Ovary (tissue), 10 donors: ENCODE measurements at regions of chr15 and their contacts with region 1.

Region 1: GRCh38 chr15:99565299-99566156 is at the start of gene MEF2A:
- DNase-seq: peak; percentile 96 to 97 (median 96)
- H3K4me3 ChIP-seq: peak within 1 kb of the TSS; percentile 71
- H3K27ac ChIP-seq: peak within 1 kb of the TSS; percentile 91 to 99
- H3K4me1 ChIP-seq: peaks cover 3% of the 10 kb centered on the region
- H3K27me3 ChIP-seq: no peaks in the 10 kb centered on the region
- CTCF ChIP-seq: no peak
- EP300 ChIP-seq: no peak
- POLR2A ChIP-seq: peak; percentile 87
- total RNA-seq, gene MEF2A: 43.2 to 82.7 (median 66.4) TPM

Region 2: GRCh38 chr15:99250494-99251435 is 314.8 kb before region 1 on chr15:
- intact Hi-C with region 1: no loop called
- DNase-seq: peak; percentile 99
- H3K4me3 ChIP-seq: peak overlapping the region; percentile 71
- H3K27ac ChIP-seq: peak overlapping the region; percentile 75 to 81
- H3K4me1 ChIP-seq: peaks cover 5% of the 10 kb centered on the region
- H3K27me3 ChIP-seq: no peaks in the 10 kb centered on the region
- CTCF ChIP-seq: no peak
- EP300 ChIP-seq: no peak
- POLR2A ChIP-seq: peak; percentile 98

Region 3: DNA sequence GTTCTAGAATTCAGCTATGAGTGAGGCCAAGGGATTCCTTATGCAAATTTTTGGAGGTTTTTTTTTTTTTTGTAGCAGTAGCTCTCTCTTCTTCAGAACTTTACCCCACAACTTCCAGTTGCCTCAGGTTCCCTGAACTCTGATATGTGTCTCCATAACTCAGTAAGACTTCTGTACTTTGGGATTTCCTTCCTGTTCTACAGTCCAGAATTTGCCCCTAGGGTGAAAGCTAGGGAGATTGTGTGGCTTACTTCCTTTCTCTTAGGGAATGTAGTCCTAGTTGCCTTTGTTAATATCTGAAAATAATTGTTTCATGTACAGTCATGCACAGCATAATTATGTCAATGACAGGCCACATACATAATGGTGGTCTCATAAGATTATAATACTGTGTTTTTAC is 283.4 kb before region 1 on chr15:
- intact Hi-C with region 1: loop called in 1 of 4 experiments (anchors 10 kb)
- DNase-seq: no peak
- H3K4me3 ChIP-seq: no peak overlapping the region
- H3K27ac ChIP-seq: no peak overlapping the region
- H3K4me1 ChIP-seq: no peaks in the 10 kb centered on the region
- H3K27me3 ChIP-seq: no peaks in the 10 kb centered on the region
- CTCF ChIP-seq: no peak
- EP300 ChIP-seq: no peak
- POLR2A ChIP-seq: no peak

Region 4: DNA sequence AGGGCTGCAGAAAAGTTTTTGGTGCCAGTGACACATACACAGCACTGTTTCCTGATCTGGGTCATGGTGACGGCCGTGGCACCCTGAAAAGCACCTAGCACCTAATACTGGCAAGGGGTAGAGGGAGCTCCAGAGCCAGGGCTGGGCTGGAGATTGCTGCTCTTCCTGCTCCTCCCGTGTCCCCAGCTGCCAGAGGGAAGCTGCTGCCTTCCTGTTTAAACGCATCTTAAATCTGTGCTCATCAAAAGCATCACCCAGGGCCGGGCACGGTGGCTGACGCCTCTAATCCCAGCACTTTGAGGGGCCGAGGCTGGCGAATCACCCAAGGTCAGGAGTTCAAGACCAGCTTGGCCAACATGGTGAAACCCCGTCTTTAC is 156.4 kb before region 1 on chr15:
- intact Hi-C with region 1: loop called in 1 of 4 experiments (anchors 10 kb)
- DNase-seq: peak in 3 of 5 donors; percentile 42 to 57 (median 42)
- H3K4me3 ChIP-seq: no peak overlapping the region
- H3K27ac ChIP-seq: peak overlapping the region in 1 of 2 donors; percentile 22
- H3K4me1 ChIP-seq: peaks cover 6% of the 10 kb centered on the region
- H3K27me3 ChIP-seq: no peaks in the 10 kb centered on the region
- CTCF ChIP-seq: no peak
- EP300 ChIP-seq: no peak
- POLR2A ChIP-seq: no peak